Dorsolateral prefrontal cortex (tissue), 120 donors: ENCODE measurements at regions of chr14 and their contacts with region 1.

Region 1: GRCh38 chr14:70317969-70318634 is 41.4 kb downstream of the COX16 start:
- DNase-seq: peak in 5 of 10 donors; percentile 17 to 51 (median 39)
- H3K4me3 ChIP-seq: no peak overlapping the region
- H3K27ac ChIP-seq: no peak overlapping the region
- H3K27me3 ChIP-seq: peaks cover 0 to 7% (median 0%) of the 10 kb centered on the region in 45 donors
- CTCF ChIP-seq: peak in 55 of 56 donors; percentile 37 to 86 (median 67)

Region 2: DNA sequence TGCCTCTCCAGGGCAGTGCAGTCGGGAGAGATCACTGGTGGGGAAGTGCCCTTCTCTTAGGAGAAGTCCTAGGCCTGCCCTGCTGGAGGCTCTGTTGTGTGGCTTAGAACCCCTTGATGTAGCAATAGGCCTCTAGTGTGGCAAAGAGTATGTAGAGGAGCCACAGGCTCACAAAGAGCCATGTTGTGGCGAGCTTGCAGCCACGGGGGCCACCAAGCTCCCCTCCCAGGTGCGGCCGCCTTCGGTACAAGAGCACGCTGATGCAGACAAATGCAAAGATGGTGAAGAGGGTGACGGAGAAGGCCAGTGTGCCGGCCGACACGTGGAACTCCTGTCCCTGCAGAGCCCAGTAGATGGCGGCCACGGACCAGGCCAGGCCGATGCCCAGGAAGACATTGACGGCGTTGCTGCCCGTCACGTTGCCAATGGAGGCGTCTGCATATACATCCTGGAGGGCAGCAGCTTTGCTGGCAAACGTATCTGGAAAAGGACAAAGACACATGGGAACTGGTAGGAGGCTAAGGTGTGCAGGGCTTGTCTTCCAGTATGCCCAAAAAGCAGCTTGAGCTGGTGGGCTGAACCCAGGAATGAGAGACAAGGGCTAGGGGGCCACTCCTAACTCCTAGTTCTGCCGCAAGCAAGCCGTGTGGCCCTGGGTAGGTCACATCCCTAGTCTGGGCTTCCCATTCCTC is 272.1 kb before region 1 on chr14:
- intact Hi-C with region 1: loop called (anchors 5 to 10 kb)
- DNase-seq: peak; percentile 69 to 88 (median 83)
- H3K4me3 ChIP-seq: no peak overlapping the region
- H3K27ac ChIP-seq: peak overlapping the region in 17 of 59 donors; percentile 5 to 67 (median 28)
- H3K27me3 ChIP-seq: no peaks in the 10 kb centered on the region
- CTCF ChIP-seq: peak; percentile 39 to 87 (median 77)

Region 3: GRCh38 chr14:70052990-70053389 is 265.1 kb before region 1 on chr14:
- intact Hi-C with region 1: loop called (anchors 5 to 10 kb)
- DNase-seq: no peak
- H3K4me3 ChIP-seq: no peak overlapping the region
- H3K27ac ChIP-seq: no peak overlapping the region
- H3K27me3 ChIP-seq: peaks cover 0 to 5% (median 0%) of the 10 kb centered on the region in 45 donors
- CTCF ChIP-seq: no peak

Region 4: GRCh38 chr14:70073924-70074566 is 244.1 kb before region 1 on chr14:
- intact Hi-C with region 1: no loop called
- DNase-seq: peak in 9 of 10 donors; percentile 46 to 83 (median 75)
- H3K4me3 ChIP-seq: no peak overlapping the region
- H3K27ac ChIP-seq: no peak overlapping the region
- H3K27me3 ChIP-seq: peaks cover 0 to 4% (median 0%) of the 10 kb centered on the region in 45 donors
- CTCF ChIP-seq: peak; percentile 63 to 95 (median 83)

Region 5: DNA sequence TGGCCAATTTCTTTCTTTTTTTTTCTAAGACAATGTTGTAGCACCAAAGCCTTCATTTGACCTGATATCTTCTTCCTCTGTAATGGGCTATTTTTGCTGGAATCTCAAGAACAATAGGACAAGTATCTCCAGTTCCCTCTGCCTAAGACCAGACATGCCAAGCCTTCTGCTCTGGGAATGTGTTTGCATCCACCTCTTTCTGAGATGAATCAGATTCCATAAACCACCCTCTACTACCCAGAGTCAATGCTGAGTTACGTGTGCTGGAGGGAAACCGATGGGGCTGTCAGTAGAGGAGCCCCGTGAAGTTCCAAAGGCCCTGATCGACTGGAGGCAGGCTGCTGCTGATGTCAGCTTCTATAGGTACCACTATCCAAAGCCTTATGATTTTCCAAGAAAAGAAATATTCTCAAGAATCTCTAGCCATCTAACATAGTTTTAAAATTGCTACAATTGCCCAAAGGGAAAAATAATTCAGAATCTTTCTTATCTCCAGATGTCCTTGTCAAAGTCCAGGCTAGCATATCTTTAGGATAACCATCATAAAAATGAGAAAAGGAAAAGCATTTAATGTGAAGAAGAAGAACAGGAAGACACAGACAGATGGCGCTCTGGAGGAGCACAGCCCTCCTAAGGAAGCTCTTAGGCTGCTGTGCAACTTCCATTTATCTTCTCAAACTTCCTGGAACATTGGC is 231.3 kb before region 1 on chr14:
- intact Hi-C with region 1: loop called in 1 of 2 experiments (anchors 5 kb)
- DNase-seq: peak in 2 of 10 donors; percentile 31 to 41
- H3K4me3 ChIP-seq: no peak overlapping the region
- H3K27ac ChIP-seq: no peak overlapping the region
- H3K27me3 ChIP-seq: no peaks in the 10 kb centered on the region
- CTCF ChIP-seq: peak; percentile 14 to 76 (median 57)